Heart right ventricle (tissue), 16 donors: ENCODE measurements at regions of chr4 and their contacts with region 1.

Region 1: GRCh38 chr4:87093443-87094123 is 126.8 kb downstream of the KLHL8 start:
- DNase-seq: peak in 1 of 2 donors; percentile 44
- ATAC-seq: peak; percentile 45 to 89 (median 80)
- H3K4me3 ChIP-seq: no peak overlapping the region
- H3K27ac ChIP-seq: peak overlapping the region in 7 of 10 donors; percentile 4 to 52 (median 25)
- H3K4me1 ChIP-seq: peaks cover 4 to 50% (median 35%) of the 10 kb centered on the region in 9 donors
- H3K27me3 ChIP-seq: no peaks in the 10 kb centered on the region
- CTCF ChIP-seq: peak; percentile 48 to 79 (median 70)

Region 2: GRCh38 chr4:86921608-86922252 is 171.9 kb before region 1 on chr4:
- intact Hi-C with region 1: loop called (anchors 1 to 5 kb)
- DNase-seq: no peak
- ATAC-seq: no peak
- H3K4me3 ChIP-seq: no peak overlapping the region
- H3K27ac ChIP-seq: no peak overlapping the region
- H3K4me1 ChIP-seq: peaks cover 0 to 31% (median 0%) of the 10 kb centered on the region in 9 donors
- H3K27me3 ChIP-seq: no peaks in the 10 kb centered on the region
- CTCF ChIP-seq: no peak

Region 3: GRCh38 chr4:86927843-86928395 is 165.7 kb before region 1 on chr4:
- intact Hi-C with region 1: loop called in 7 of 10 experiments (anchors 2 to 5 kb)
- DNase-seq: no peak
- ATAC-seq: peak in 5 of 8 donors; percentile 34 to 93 (median 56)
- H3K4me3 ChIP-seq: no peak overlapping the region
- H3K27ac ChIP-seq: peak overlapping the region in 1 of 10 donors; percentile 52
- H3K4me1 ChIP-seq: peaks cover 0 to 29% (median 0%) of the 10 kb centered on the region in 9 donors
- H3K27me3 ChIP-seq: no peaks in the 10 kb centered on the region
- CTCF ChIP-seq: no peak

Region 4: GRCh38 chr4:86934771-86935565 is 158.6 kb before region 1 on chr4 and contains the start of gene AFF1:
- intact Hi-C with region 1: loop called in 3 of 10 experiments (anchors 5 kb)
- DNase-seq: peak; percentile 94 to 96
- ATAC-seq: peak; percentile 93 to 97 (median 94)
- H3K4me3 ChIP-seq: peak within 1 kb of the TSS; percentile 52 to 99 (median 94)
- H3K27ac ChIP-seq: peak within 1 kb of the TSS; percentile 94 to 100 (median 98)
- H3K4me1 ChIP-seq: peaks cover 0 to 52% (median 35%) of the 10 kb centered on the region in 9 donors
- H3K27me3 ChIP-seq: no peaks in the 10 kb centered on the region
- CTCF ChIP-seq: peak; percentile 22 to 75 (median 61)
- total RNA-seq, gene AFF1: 59.5 to 90.2 (median 77.3) TPM

Region 5: GRCh38 chr4:87044511-87045233 is 48.9 kb before region 1 on chr4:
- intact Hi-C with region 1: loop called in 1 of 10 experiments (anchors 2 kb)
- DNase-seq: peak in 1 of 2 donors; percentile 61
- ATAC-seq: peak in 7 of 8 donors; percentile 45 to 77 (median 70)
- H3K4me3 ChIP-seq: peak overlapping the region in 7 of 10 donors; percentile 20 to 45 (median 36)
- H3K27ac ChIP-seq: peak overlapping the region; percentile 55 to 95 (median 86)
- H3K4me1 ChIP-seq: peaks cover 18 to 96% (median 87%) of the 10 kb centered on the region in 9 donors
- H3K27me3 ChIP-seq: no peaks in the 10 kb centered on the region
- CTCF ChIP-seq: no peak

Region 6: GRCh38 chr4:87220094-87220822 is 126.7 kb after region 1 on chr4 and contains the start of gene KLHL8:
- intact Hi-C with region 1: no loop called
- DNase-seq: peak; percentile 86 to 90
- ATAC-seq: peak; percentile 98 to 100 (median 98)
- H3K4me3 ChIP-seq: peak within 1 kb of the TSS; percentile 77 to 99 (median 92)
- H3K27ac ChIP-seq: peak within 1 kb of the TSS; percentile 32 to 94 (median 94)
- H3K4me1 ChIP-seq: peaks cover 0 to 18% (median 12%) of the 10 kb centered on the region in 9 donors
- H3K27me3 ChIP-seq: no peaks in the 10 kb centered on the region
- CTCF ChIP-seq: peak in 2 of 9 donors; percentile 11 to 38
- total RNA-seq, gene KLHL8: 10.4 to 15.0 (median 11.9) TPM

Region 7: DNA sequence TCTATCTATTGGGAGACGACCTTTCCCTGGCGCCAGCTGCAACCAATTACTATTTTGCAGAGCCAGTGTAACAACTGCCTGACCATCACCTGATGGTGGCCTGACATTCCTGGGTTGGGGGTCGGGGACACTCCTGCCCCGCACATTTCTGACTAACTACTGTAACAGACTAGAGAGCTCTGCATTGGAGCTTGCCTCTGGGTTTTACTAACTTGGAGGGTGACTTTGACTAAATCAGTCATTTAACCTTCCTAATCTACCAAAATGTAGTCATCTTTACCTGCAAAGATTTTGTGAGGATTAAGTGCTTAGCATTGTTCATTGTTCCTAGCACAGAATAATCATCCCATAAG is 1102.4 kb after region 1 on chr4:
- intact Hi-C with region 1: no loop called
- DNase-seq: no peak
- ATAC-seq: no peak
- H3K4me3 ChIP-seq: no peak overlapping the region
- H3K27ac ChIP-seq: no peak overlapping the region
- H3K4me1 ChIP-seq: no peaks in the 10 kb centered on the region
- H3K27me3 ChIP-seq: no peaks in the 10 kb centered on the region
- CTCF ChIP-seq: no peak